GM12878 (cell line): ENCODE measurements at regions of chr11 and their contacts with region 1.

Region 1: GRCh38 chr11:100855466-100856067 is 168.5 kb downstream of the ARHGAP42 start:
- DNase-seq: no peak
- ATAC-seq: peak; percentile 60
- H3K4me3 ChIP-seq: no peak overlapping the region
- H3K27ac ChIP-seq: no peak overlapping the region
- H3K4me1 ChIP-seq: no peaks in the 10 kb centered on the region
- H3K27me3 ChIP-seq: no peaks in the 10 kb centered on the region
- CTCF ChIP-seq: peak; percentile 35 to 64 (median 37); a peak in 4 of 6 replicates
- EP300 ChIP-seq: no peak
- POLR2A ChIP-seq: no peak
- RAD21 ChIP-seq: peak; percentile 77

Region 2: GRCh38 chr11:100575870-100576705 is 279.5 kb before region 1 on chr11:
- CTCF ChIA-PET with region 1: interaction called, 61 read pairs
- POLR2A ChIA-PET with region 1: no interaction called
- RAD21 ChIA-PET with region 1: interaction called, 19 read pairs
- SMC1A ChIA-PET with region 1: interaction called, 38 read pairs
- in situ Hi-C with region 1: loop called (anchors 5 kb)
- intact Hi-C with region 1: loop called (anchors 1 kb)
- DNase-seq: peak; percentile 9
- ATAC-seq: peak; percentile 95
- H3K4me3 ChIP-seq: no peak overlapping the region
- H3K27ac ChIP-seq: no peak overlapping the region
- H3K4me1 ChIP-seq: no peaks in the 10 kb centered on the region
- H3K27me3 ChIP-seq: no peaks in the 10 kb centered on the region
- CTCF ChIP-seq: peak; percentile 59 to 76 (median 71)
- EP300 ChIP-seq: no peak
- POLR2A ChIP-seq: no peak
- RAD21 ChIP-seq: peak; percentile 97

Region 3: GRCh38 chr11:100584201-100584985 is 271.2 kb before region 1 on chr11:
- CTCF ChIA-PET with region 1: interaction called, 61 read pairs
- POLR2A ChIA-PET with region 1: no interaction called
- RAD21 ChIA-PET with region 1: no interaction called
- SMC1A ChIA-PET with region 1: interaction called, 3 read pairs
- in situ Hi-C with region 1: loop called (anchors 5 kb)
- intact Hi-C with region 1: no loop called
- DNase-seq: no peak
- ATAC-seq: no peak
- H3K4me3 ChIP-seq: no peak overlapping the region
- H3K27ac ChIP-seq: no peak overlapping the region
- H3K4me1 ChIP-seq: no peaks in the 10 kb centered on the region
- H3K27me3 ChIP-seq: peaks cover 1 to 3% of the 10 kb centered on the region in 2 experiments; a peak in 3 of 4 replicates
- CTCF ChIP-seq: no peak
- EP300 ChIP-seq: no peak
- POLR2A ChIP-seq: no peak
- RAD21 ChIP-seq: no peak

Region 4: GRCh38 chr11:100687630-100688395 is 167.8 kb before region 1 on chr11:
- CTCF ChIA-PET with region 1: interaction called, 21 read pairs
- POLR2A ChIA-PET with region 1: no interaction called
- RAD21 ChIA-PET with region 1: interaction called, 4 read pairs
- SMC1A ChIA-PET with region 1: interaction called, 5 read pairs
- in situ Hi-C with region 1: loop called (anchors 10 kb)
- intact Hi-C with region 1: no loop called
- DNase-seq: no peak
- ATAC-seq: peak; percentile 73
- H3K4me3 ChIP-seq: peak overlapping the region; percentile 96
- H3K27ac ChIP-seq: peak overlapping the region; percentile 74
- H3K4me1 ChIP-seq: peaks cover 28% of the 10 kb centered on the region
- H3K27me3 ChIP-seq: no peaks in the 10 kb centered on the region
- CTCF ChIP-seq: peak; percentile 65 to 72 (median 70); a peak in 5 of 6 replicates
- EP300 ChIP-seq: no peak
- POLR2A ChIP-seq: no peak
- RAD21 ChIP-seq: peak; percentile 42